ENCODE measurements at regions of chr2 and their contacts with region 1.

Region 1: DNA sequence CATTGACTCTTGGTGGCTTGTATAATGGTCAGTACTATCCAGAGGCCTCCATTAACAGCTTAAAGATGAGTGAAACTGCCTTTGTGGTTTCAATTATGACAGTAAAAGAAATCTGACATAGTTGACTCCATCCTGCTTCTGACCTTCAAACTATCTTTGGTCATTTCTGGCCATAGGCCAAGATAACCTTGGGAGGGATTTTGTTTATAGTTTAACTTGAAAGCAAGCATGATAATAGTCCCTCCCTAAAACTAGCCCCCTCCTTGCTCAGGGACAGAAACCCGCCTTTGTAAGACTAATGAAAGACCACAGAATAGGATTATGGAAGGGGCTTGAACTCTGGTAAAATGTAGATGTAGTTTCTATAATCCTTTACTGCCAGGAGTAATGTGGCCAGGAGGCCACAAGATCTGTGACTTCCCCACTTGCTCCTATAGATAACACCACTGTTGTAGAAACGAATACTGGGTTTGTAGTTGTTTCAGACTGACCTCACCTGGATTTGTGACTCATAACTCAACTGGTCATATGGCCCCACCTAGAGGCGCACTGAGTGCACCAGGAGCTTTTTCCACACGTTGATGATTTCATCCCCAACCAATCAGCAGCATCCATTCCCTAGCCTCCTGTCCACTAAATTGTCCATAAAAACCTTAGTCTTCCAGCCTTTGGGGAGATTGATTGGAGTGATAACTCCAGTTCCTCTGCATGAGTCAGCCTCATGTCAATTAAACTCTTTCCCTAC is 8.6 kb upstream of the PLEKHM3 start:
- DNase-seq: no peak
- ATAC-seq: peak; percentile 92
- H3K4me3 ChIP-seq: no peak overlapping the region
- H3K27ac ChIP-seq: no peak overlapping the region
- H3K4me1 ChIP-seq: peaks cover 8% of the 10 kb centered on the region
- H3K27me3 ChIP-seq: no peaks in the 10 kb centered on the region
- CTCF ChIP-seq: peak; percentile 54 to 74 (median 69); a peak in 5 of 6 replicates
- EP300 ChIP-seq: 0 out of 4 replicates have a peak, but pooled peaks of 1 of the 2 experiments have one; percentile 24
- POLR2A ChIP-seq: no peak
- RAD21 ChIP-seq: peak; percentile 81

Region 2: DNA sequence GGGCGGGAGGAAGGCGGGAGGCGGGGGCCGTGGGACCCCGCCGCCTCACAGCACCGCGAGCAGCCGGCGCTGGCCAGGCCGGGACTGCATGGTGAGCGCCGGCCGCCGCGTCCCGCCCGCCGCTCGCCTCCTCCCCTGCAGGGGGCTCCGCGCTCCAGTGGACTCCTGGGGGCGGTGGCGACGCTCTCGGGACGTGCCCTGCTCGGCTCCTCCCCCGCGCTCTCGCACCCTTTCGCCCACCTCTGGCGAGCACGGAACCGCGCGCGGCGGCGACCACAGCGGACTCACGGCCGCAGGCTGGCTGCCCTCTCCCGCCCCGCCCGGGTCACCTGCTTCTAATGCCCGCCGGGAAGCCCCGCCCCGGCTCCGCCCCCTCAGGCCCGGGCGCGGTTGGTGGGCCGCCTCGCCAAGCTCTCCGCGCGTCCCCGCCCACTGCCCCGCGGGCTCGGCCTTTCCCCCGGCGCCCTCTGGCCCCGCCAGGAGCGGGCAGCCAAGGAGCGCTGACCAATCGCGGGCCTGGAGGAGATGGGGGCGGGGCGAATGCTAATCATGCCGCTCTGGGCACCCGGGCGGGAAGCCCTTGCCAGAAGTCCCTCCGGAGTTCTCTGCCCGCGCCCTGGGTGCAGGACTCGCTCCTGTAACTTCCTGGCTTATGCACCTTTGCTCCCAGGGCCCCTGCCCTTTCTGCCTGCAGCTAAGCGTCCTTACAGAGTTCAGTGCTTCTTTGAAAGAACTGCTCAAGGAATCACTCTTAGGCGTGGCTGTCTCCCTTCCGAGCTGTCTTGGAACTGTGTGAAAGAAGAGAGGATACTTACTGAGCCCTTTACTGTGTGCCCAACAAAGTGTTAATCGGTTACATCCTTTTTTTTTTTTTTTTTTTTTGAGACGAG is 264.1 kb before region 1 on chr2 and contains the start of gene FZD5:
- CTCF ChIA-PET with region 1: interaction called, 11 read pairs
- POLR2A ChIA-PET with region 1: no interaction called
- RAD21 ChIA-PET with region 1: no interaction called
- SMC1A ChIA-PET with region 1: no interaction called
- in situ Hi-C with region 1: no loop called
- intact Hi-C with region 1: loop called (anchors 5 kb)
- DNase-seq: peak; percentile 68
- ATAC-seq: peak; percentile 92
- H3K4me3 ChIP-seq: peak within 1 kb of the TSS; percentile 87
- H3K27ac ChIP-seq: no peak within 1 kb of the TSS
- H3K4me1 ChIP-seq: peaks cover 17% of the 10 kb centered on the region
- H3K27me3 ChIP-seq: no peaks in the 10 kb centered on the region; a peak in 2 of 4 replicates
- CTCF ChIP-seq: peak; percentile 16 to 46 (median 44); a peak in 3 of 6 replicates
- EP300 ChIP-seq: 0 out of 4 replicates have a peak, but pooled peaks of 1 of the 2 experiments have one; percentile 35
- POLR2A ChIP-seq: peak; percentile 59
- RAD21 ChIP-seq: peak; percentile 28; the same call in 1 of the 2 replicates
- polyA plus RNA-seq, gene FZD5: 0.40 to 0.53 TPM

Region 3: GRCh38 chr2:207983641-207984042 is 50.3 kb before region 1 on chr2:
- CTCF ChIA-PET with region 1: no interaction called
- POLR2A ChIA-PET with region 1: no interaction called
- RAD21 ChIA-PET with region 1: no interaction called
- SMC1A ChIA-PET with region 1: no interaction called
- in situ Hi-C with region 1: no loop called
- intact Hi-C with region 1: loop called (anchors 5 kb)
- DNase-seq: peak; percentile 55
- ATAC-seq: peak; percentile 89
- H3K4me3 ChIP-seq: no peak overlapping the region
- H3K27ac ChIP-seq: peak overlapping the region; percentile 62
- H3K4me1 ChIP-seq: peaks cover 21% of the 10 kb centered on the region
- H3K27me3 ChIP-seq: no peaks in the 10 kb centered on the region
- CTCF ChIP-seq: no peak
- EP300 ChIP-seq: peak in 1 of 2 experiments; percentile 79; a peak in 2 of 4 replicates
- POLR2A ChIP-seq: no peak
- RAD21 ChIP-seq: no peak